CD14-positive monocyte (primary cell): ENCODE measurements at regions of chr7 and their contacts with region 1.

Region 1: GRCh38 chr7:98956937-98957336 is 78.6 kb downstream of the TRRAP start:
- DNase-seq: no peak
- H3K4me3 ChIP-seq: no peak overlapping the region
- H3K4me3 Mint-ChIP-seq: no peak overlapping the region
- H3K27ac ChIP-seq: no peak overlapping the region
- H3K27ac Mint-ChIP-seq: peak overlapping the region in 2 of 7 donors; percentile 31 to 34
- H3K4me1 ChIP-seq: no peaks in the 10 kb centered on the region
- H3K4me1 Mint-ChIP-seq: no peaks in the 10 kb centered on the region
- H3K27me3 ChIP-seq: no peaks in the 10 kb centered on the region
- H3K27me3 Mint-ChIP-seq: no peaks in the 10 kb centered on the region
- CTCF ChIP-seq: no peak

Region 2: DNA sequence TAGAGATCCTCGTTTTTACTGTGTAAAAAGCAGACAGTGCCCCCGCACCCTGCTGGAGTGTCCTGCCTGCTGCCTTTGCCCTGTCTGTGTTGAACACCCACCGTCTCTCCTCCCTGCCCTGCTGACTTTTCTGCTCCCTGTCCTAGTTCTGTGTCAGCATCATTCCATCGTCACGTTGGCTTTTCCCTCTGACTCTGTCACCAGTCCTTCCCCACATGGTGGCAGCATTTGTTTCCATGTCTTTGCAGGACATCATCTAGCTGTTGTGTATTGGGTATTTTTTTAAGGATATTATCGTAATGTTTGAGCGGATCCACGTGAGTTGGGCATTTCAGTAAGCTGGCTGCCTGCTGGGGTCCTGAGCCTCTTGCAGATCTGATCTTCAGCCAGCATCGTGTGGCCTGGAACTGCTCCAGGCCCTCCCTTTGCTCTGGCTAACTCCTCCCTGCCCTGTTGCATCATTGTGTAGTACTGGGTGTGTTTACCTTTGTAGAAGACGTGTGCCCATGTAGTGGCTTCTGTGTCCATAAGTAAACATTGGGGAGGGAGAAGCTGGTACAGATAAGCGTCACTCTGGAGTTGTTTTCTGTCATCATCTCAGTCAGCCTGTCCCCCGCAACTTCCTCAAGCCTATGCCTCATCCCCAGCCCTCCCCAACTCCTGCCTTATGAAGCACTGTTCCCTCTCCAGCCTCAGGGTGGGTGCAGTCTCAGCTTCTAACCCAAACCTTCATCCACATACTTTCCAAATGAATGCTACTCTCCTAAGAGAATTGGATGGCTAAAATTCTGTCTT is 34.3 kb before region 1 on chr7:
- intact Hi-C with region 1: loop called in 1 of 2 experiments (anchors 5 kb)
- DNase-seq: no peak
- H3K4me3 ChIP-seq: no peak overlapping the region
- H3K4me3 Mint-ChIP-seq: no peak overlapping the region
- H3K27ac ChIP-seq: no peak overlapping the region
- H3K27ac Mint-ChIP-seq: peak overlapping the region in 2 of 7 donors; percentile 21 to 41
- H3K4me1 ChIP-seq: no peaks in the 10 kb centered on the region
- H3K4me1 Mint-ChIP-seq: no peaks in the 10 kb centered on the region
- H3K27me3 ChIP-seq: no peaks in the 10 kb centered on the region
- H3K27me3 Mint-ChIP-seq: no peaks in the 10 kb centered on the region
- CTCF ChIP-seq: no peak

Region 3: GRCh38 chr7:99072126-99072525 is 115.2 kb after region 1 on chr7:
- intact Hi-C with region 1: no loop called
- DNase-seq: no peak
- H3K4me3 ChIP-seq: no peak overlapping the region
- H3K4me3 Mint-ChIP-seq: no peak overlapping the region
- H3K27ac ChIP-seq: no peak overlapping the region
- H3K27ac Mint-ChIP-seq: no peak overlapping the region
- H3K4me1 ChIP-seq: no peaks in the 10 kb centered on the region
- H3K4me1 Mint-ChIP-seq: peaks cover 2% of the 10 kb centered on the region
- H3K27me3 ChIP-seq: no peaks in the 10 kb centered on the region
- H3K27me3 Mint-ChIP-seq: no peaks in the 10 kb centered on the region
- CTCF ChIP-seq: no peak